ENCODE measurements at regions of chr5 and their contacts with region 1.

Region 1: GRCh38 chr5:15463231-15463980 is 36.6 kb upstream of the FBXL7 start:
- DNase-seq: peak; percentile 52
- H3K4me3 ChIP-seq: no peak overlapping the region
- H3K27ac ChIP-seq: no peak overlapping the region
- H3K4me1 ChIP-seq: no peaks in the 10 kb centered on the region
- H3K27me3 ChIP-seq: peaks cover 17 to 36% of the 10 kb centered on the region in 2 experiments
- CTCF ChIP-seq: peak; percentile 30 to 45
- POLR2A ChIP-seq: no peak

Region 2: GRCh38 chr5:15794052-15794985 is 330.9 kb after region 1 on chr5:
- CTCF ChIA-PET with region 1: interaction called, 4 read pairs
- POLR2A ChIA-PET with region 1: no interaction called
- dilution Hi-C with region 1: no loop called
- intact Hi-C with region 1: loop called (anchors 1 kb)
- DNase-seq: peak; percentile 74
- H3K4me3 ChIP-seq: no peak overlapping the region
- H3K27ac ChIP-seq: peak overlapping the region; percentile 41
- H3K4me1 ChIP-seq: peaks cover 30% of the 10 kb centered on the region
- H3K27me3 ChIP-seq: no peaks in the 10 kb centered on the region
- CTCF ChIP-seq: peak in 1 of 2 donors; percentile 15
- POLR2A ChIP-seq: no peak

Region 3: DNA sequence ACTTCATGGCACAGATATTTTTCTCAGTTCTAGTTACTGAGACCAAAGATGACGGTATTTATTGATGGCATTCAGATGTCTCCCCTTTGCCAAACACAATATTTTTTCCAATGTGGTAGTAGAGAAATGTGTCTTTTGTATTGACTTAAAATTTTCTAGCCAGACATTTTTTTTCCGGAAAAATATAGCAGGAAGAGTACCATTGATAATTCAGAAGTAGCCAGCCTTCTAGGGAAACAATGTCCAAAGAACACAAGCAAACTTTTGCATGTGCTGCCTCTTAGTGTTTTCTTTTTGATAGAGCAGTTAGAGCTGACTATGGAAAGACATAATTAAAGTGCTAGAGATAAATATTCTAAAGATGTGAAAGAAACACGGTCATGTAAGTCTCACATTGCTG is 484.8 kb after region 1 on chr5:
- CTCF ChIA-PET with region 1: no interaction called
- POLR2A ChIA-PET with region 1: no interaction called
- dilution Hi-C with region 1: no loop called
- intact Hi-C with region 1: loop called (anchors 1 kb)
- DNase-seq: peak; percentile 55
- H3K4me3 ChIP-seq: no peak overlapping the region
- H3K27ac ChIP-seq: no peak overlapping the region
- H3K4me1 ChIP-seq: no peaks in the 10 kb centered on the region
- H3K27me3 ChIP-seq: no peaks in the 10 kb centered on the region
- CTCF ChIP-seq: peak in 1 of 2 donors; percentile 22
- POLR2A ChIP-seq: no peak

Region 4: DNA sequence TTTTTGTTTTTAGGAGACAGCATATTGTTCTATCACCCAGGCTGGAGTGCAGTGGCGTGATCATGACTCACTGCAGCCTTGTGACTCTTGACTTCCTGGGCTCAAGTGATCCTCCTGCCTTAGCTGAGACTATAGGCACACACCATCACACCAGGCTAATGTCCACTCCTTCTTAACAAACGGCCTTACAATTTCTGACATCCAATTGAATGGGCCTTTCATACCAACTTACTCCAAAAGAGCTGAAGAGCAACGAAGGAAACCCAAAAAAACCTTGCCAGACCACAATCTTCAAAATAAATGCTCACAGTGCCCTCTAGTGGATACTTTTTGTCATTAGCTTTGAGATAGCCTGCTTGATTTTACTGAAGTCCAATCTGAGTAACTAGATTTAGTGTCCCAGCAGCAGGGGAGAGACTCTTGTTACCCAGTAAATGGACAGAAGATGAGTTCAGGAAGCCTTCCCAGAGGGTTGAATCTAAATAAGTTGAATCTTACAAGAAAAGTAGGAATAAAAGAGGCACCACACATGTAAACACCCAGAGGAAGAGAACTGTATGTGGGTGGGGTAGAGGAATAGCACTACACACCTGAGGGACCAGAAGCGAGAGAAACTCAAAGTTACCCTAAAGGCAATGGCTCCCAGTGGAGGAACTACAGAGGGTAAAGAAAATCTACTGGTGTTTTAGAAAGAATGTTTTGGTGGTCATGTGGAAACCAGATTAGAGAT is 992.9 kb after region 1 on chr5:
- CTCF ChIA-PET with region 1: interaction called, 4 read pairs
- POLR2A ChIA-PET with region 1: no interaction called
- dilution Hi-C with region 1: no loop called
- intact Hi-C with region 1: loop called (anchors 1 kb)
- DNase-seq: peak; percentile 75
- H3K4me3 ChIP-seq: no peak overlapping the region
- H3K27ac ChIP-seq: peak overlapping the region; percentile 85
- H3K4me1 ChIP-seq: peaks cover 12% of the 10 kb centered on the region
- H3K27me3 ChIP-seq: no peaks in the 10 kb centered on the region
- CTCF ChIP-seq: peak; percentile 56 to 65
- POLR2A ChIP-seq: no peak

Region 5: DNA sequence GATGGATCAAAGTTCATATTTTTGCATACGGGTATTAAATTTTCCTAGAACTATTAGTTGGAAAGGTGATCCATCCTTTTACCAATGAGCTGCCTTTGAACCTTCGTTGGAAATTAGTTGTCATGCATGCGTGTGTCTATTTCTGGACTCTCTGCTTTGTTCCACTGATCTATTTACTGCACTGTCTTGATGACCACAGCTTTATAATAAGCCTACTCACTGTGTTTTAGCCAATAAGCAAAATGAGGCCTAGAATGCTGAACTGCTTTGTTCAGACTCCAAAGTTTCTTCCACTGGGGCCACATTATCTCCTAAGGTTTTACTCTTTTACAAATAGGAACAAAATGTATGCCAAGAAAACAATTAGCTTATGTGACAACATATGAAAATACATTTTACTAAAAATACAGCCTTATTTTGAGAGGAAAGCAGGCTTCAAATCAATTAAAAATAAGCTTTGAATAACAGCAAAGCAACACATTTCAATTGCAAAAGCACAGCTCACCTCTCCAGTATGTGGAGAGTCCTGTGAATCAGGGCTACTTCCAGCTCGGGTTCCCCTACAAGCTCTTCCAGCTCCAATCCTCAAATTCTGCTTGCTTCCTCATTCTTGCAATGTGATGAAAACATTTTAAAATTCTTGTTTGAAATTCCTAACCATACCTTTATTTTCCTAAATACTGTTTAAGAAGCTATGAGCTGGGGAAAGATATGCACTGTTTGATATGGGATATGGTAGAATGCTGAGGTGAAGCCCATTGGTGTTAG is 1081.4 kb after region 1 on chr5:
- CTCF ChIA-PET with region 1: no interaction called
- POLR2A ChIA-PET with region 1: no interaction called
- dilution Hi-C with region 1: no loop called
- intact Hi-C with region 1: loop called (anchors 5 kb)
- DNase-seq: no peak
- H3K4me3 ChIP-seq: no peak overlapping the region
- H3K27ac ChIP-seq: no peak overlapping the region
- H3K4me1 ChIP-seq: no peaks in the 10 kb centered on the region
- H3K27me3 ChIP-seq: peaks cover 0 to 7% of the 10 kb centered on the region in 2 experiments
- CTCF ChIP-seq: no peak
- POLR2A ChIP-seq: no peak